Kidney (tissue), 22 donors: ENCODE measurements at regions of chr1 and their contacts with region 1.

Region 1: GRCh38 chr1:11838349-11839272 is 9.0 kb downstream of the NPPA start:
- DNase-seq: peak; percentile 57 to 90 (median 72)
- H3K4me3 ChIP-seq: no peak overlapping the region
- H3K27ac ChIP-seq: no peak overlapping the region
- H3K4me1 ChIP-seq: no peaks in the 10 kb centered on the region
- H3K27me3 ChIP-seq: no peaks in the 10 kb centered on the region
- CTCF ChIP-seq: peak; percentile 91

Region 2: DNA sequence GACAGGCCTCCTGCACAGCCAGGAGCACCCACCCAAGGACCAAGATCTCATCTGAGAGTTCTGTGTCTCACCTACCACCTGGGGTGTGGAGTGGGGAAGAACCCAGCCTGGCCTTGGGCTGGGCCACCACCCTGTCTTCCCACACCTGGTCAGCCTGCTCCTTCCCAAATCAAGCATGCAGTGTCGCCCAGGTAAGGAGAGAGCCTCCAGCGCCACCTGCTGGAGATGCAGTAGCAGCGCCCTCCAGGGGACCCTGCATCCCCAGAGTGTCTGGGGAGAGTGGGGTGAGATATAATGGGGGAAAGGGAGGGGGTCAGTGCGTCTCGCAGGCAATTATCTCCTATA is 55.3 kb after region 1 on chr1:
- intact Hi-C with region 1: loop called (anchors 5 kb)
- DNase-seq: peak in 4 of 5 donors; percentile 47 to 76 (median 70)
- H3K4me3 ChIP-seq: no peak overlapping the region
- H3K27ac ChIP-seq: no peak overlapping the region
- H3K4me1 ChIP-seq: no peaks in the 10 kb centered on the region
- H3K27me3 ChIP-seq: peaks cover 2% of the 10 kb centered on the region
- CTCF ChIP-seq: peak; percentile 90